Right lobe of liver (tissue), 6 donors: ENCODE measurements at regions of chr7 and their contacts with region 1.

Region 1: GRCh38 chr7:151110941-151111645 is 24.8 kb downstream of the AGAP3 start:
- DNase-seq: peak; percentile 77 to 81 (median 80)
- ATAC-seq: peak; percentile 90 to 95 (median 92)
- H3K4me3 ChIP-seq: no peak overlapping the region
- H3K27ac ChIP-seq: no peak overlapping the region
- H3K4me1 ChIP-seq: no peaks in the 10 kb centered on the region
- H3K27me3 ChIP-seq: no peaks in the 10 kb centered on the region
- CTCF ChIP-seq: peak; percentile 85 to 91 (median 87)
- POLR2A ChIP-seq: no peak

Region 2: GRCh38 chr7:151032936-151033863 is 77.9 kb before region 1 on chr7:
- intact Hi-C with region 1: loop called in 1 of 2 experiments (anchors 5 kb)
- DNase-seq: no peak
- ATAC-seq: no peak
- H3K4me3 ChIP-seq: no peak overlapping the region
- H3K27ac ChIP-seq: no peak overlapping the region
- H3K4me1 ChIP-seq: no peaks in the 10 kb centered on the region
- H3K27me3 ChIP-seq: no peaks in the 10 kb centered on the region
- CTCF ChIP-seq: no peak
- POLR2A ChIP-seq: no peak